ENCODE measurements at regions of chr5 and their contacts with region 1.

Region 1: GRCh38 chr5:149268928-149269557 is 2.6 kb upstream of the AFAP1L1 start:
- DNase-seq: no peak
- ATAC-seq: no peak
- H3K4me3 ChIP-seq: no peak overlapping the region
- H3K27ac ChIP-seq: peak overlapping the region in 5 of 12 donors; percentile 7 to 50 (median 39)
- H3K4me1 ChIP-seq: peaks cover 0 to 29% (median 17%) of the 10 kb centered on the region in 12 donors
- H3K27me3 ChIP-seq: peaks cover 0 to 24% (median 0%) of the 10 kb centered on the region in 9 donors
- CTCF ChIP-seq: peak; percentile 56 to 92 (median 75)
- POLR2A ChIP-seq: no peak

Region 2: DNA sequence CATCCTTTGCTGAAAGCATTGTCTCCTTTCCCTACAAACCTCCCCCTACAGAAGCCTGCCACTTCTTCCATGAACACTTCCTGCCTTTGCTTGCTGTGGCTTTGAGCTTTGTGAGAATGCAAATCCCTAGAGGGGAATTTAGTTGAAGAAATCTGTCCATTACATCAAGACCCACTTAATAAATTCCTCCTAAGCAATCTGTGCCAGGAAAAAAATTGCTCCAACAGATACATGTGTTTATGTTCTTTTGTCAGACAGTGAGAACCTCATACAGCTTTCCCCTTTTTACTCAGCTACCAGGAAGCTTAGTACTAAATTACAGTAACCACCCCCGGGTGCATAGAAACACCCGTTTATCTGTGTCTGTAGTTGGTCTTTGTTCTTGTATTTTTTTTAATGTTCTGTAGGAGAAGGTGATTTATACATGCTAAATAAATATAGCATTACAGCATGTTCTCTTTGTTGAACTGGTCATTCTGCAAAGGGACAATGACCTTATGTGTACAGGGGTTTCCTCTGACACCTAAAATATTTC is 250.1 kb before region 1 on chr5:
- intact Hi-C with region 1: no loop called
- DNase-seq: no peak
- ATAC-seq: peak in 1 of 4 donors; percentile 81
- H3K4me3 ChIP-seq: no peak overlapping the region
- H3K27ac ChIP-seq: no peak overlapping the region
- H3K4me1 ChIP-seq: peaks cover 0 to 14% (median under 1%) of the 10 kb centered on the region in 12 donors
- H3K27me3 ChIP-seq: no peaks in the 10 kb centered on the region
- CTCF ChIP-seq: no peak
- POLR2A ChIP-seq: no peak

Region 3: GRCh38 chr5:149133795-149134780 is 135.0 kb before region 1 on chr5:
- intact Hi-C with region 1: loop called in 2 of 10 experiments (anchors 2 to 5 kb)
- DNase-seq: peak in 3 of 5 donors; percentile 60 to 92 (median 82)
- ATAC-seq: peak; percentile 83 to 94 (median 90)
- H3K4me3 ChIP-seq: no peak overlapping the region
- H3K27ac ChIP-seq: peak overlapping the region in 11 of 12 donors; percentile 18 to 95 (median 49)
- H3K4me1 ChIP-seq: peaks cover 0 to 60% (median 26%) of the 10 kb centered on the region in 12 donors
- H3K27me3 ChIP-seq: no peaks in the 10 kb centered on the region
- CTCF ChIP-seq: no peak
- POLR2A ChIP-seq: no peak

Region 4: DNA sequence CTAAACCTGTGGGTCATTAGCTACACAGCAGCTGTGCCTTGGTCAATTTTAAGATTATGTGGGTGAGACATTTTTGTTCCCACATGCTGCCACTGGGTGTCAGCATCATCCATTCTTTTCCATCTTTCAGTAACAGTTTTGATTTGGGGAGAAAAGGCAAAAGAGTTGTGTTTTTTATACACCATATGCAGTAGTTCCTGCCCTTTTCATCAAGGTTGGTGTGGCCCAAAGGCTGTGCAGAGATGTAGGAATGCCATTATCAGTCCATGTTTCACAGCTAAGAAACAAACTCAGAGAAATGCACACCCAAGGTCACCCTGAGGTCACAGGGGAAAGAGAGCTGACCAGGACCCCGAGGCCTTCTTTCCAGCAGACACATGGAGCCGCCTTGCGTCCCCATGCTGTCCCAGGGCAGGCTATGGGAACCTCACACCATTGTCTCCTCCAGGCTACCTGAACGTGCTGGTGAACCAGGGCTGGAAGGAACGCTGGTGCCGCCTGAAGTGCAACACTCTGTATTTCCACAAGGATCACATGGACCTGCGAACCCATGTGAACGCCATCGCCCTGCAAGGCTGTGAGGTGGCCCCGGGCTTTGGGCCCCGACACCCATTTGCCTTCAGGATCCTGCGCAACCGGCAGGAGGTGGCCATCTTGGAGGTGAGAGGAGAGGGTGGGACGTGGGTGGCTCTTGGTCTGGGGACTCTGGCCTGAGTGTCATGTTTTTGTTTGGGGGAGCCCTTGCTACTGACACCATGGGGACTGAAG is 48.4 kb after region 1 on chr5:
- intact Hi-C with region 1: loop called in 1 of 10 experiments (anchors 5 kb)
- DNase-seq: no peak
- ATAC-seq: no peak
- H3K4me3 ChIP-seq: no peak overlapping the region
- H3K27ac ChIP-seq: peak overlapping the region in 11 of 12 donors; percentile 2 to 79 (median 54)
- H3K4me1 ChIP-seq: peaks cover 10 to 48% (median 21%) of the 10 kb centered on the region in 12 donors
- H3K27me3 ChIP-seq: no peaks in the 10 kb centered on the region
- CTCF ChIP-seq: peak; percentile 40 to 75 (median 64)
- POLR2A ChIP-seq: no peak

Region 5: DNA sequence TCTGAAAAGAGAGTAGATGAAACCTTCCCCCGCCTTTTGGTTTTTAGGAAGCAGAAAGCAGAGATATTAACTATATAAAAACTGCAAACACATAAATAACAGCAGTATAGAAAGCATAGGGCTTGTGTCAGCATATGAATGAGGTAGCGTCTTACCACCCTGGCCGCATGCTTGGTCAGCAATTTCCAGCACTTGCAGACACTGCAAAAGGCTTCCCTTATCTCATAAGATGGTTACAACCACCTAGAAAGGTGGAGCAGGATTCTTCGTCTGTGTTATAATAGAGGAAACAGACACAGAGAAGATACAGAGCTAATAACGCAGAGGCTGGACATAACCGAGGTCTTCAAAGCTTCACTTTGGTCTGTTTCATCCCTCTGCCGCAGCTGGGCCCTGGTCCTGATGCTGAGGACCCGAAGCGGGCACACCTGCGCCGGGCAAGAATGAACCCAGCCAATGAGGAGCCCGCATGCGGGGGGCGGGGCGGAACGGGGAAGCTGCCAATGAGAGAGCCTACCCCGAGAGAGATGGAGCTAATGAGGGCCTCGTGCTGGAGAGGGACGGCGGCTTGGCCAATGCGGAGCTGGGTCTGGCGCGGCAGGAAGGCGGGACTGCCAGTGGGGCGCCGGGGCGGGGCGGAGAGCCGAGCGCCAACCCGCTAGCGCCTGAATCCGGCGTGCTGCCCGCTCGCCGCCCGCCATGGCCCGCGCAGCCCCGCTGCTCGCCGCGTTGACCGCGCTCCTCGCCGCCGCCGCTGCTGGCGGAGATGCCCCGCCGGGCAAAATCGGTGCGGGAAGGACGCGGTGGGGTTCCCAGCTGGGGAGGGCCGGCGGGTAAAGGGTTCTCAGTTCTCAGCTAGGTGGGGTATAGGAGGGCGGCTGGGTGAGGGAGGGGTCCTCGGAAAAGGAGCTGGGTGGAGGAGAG is 88.6 kb after region 1 on chr5 and contains the start of gene PCYOX1L:
- intact Hi-C with region 1: loop called in 2 of 10 experiments (anchors 5 kb)
- DNase-seq: peak; percentile 97 to 98 (median 97)
- ATAC-seq: peak; percentile 98 to 100 (median 100)
- H3K4me3 ChIP-seq: peak within 1 kb of the TSS; percentile 54 to 97 (median 77)
- H3K27ac ChIP-seq: peak within 1 kb of the TSS in 11 of 12 donors; percentile 31 to 84 (median 65)
- H3K4me1 ChIP-seq: peaks cover 0 to 30% (median 11%) of the 10 kb centered on the region in 12 donors
- H3K27me3 ChIP-seq: no peaks in the 10 kb centered on the region
- CTCF ChIP-seq: peak in 1 of 12 donors; percentile 7
- POLR2A ChIP-seq: peak in 1 of 2 donors; percentile 50
- total RNA-seq, gene PCYOX1L: 2.3 to 6.8 (median 3.7) TPM

Region 6: GRCh38 chr5:149372932-149373331 is 103.9 kb after region 1 on chr5:
- intact Hi-C with region 1: loop called in 9 of 10 experiments (anchors 1 to 5 kb)
- DNase-seq: no peak
- ATAC-seq: no peak
- H3K4me3 ChIP-seq: no peak overlapping the region
- H3K27ac ChIP-seq: peak overlapping the region in 1 of 12 donors; percentile 61
- H3K4me1 ChIP-seq: peaks cover 0 to 18% (median 6%) of the 10 kb centered on the region in 12 donors
- H3K27me3 ChIP-seq: no peaks in the 10 kb centered on the region
- CTCF ChIP-seq: no peak
- POLR2A ChIP-seq: no peak

Region 7: GRCh38 chr5:149561848-149562247 is 292.8 kb after region 1 on chr5:
- intact Hi-C with region 1: loop called in 2 of 10 experiments (anchors 5 kb)
- DNase-seq: peak in 1 of 5 donors; percentile 40
- ATAC-seq: peak; percentile 87 to 94 (median 94)
- H3K4me3 ChIP-seq: peak overlapping the region in 7 of 12 donors; percentile 1 to 25 (median 16)
- H3K27ac ChIP-seq: peak overlapping the region; percentile 57 to 90 (median 84)
- H3K4me1 ChIP-seq: peaks cover 0 to 47% (median 32%) of the 10 kb centered on the region in 12 donors
- H3K27me3 ChIP-seq: no peaks in the 10 kb centered on the region
- CTCF ChIP-seq: no peak
- POLR2A ChIP-seq: no peak